Head of caudate nucleus (tissue), 42 donors: ENCODE measurements at regions of chr3 and their contacts with region 1.

Region 1: GRCh38 chr3:173411375-173411973 is 13.9 kb downstream of the NLGN1 start:
- DNase-seq: peak in 34 of 42 donors; percentile 26 to 83 (median 58)

Region 2: GRCh38 chr3:173439004-173439403 is 27.5 kb after region 1 on chr3:
- intact Hi-C with region 1: no loop called
- DNase-seq: no peak

Region 3: GRCh38 chr3:173553635-173554280 is 142.3 kb after region 1 on chr3:
- intact Hi-C with region 1: loop called (anchors 10 kb)
- DNase-seq: peak in 30 of 42 donors; percentile 14 to 80 (median 43)

Region 4: DNA sequence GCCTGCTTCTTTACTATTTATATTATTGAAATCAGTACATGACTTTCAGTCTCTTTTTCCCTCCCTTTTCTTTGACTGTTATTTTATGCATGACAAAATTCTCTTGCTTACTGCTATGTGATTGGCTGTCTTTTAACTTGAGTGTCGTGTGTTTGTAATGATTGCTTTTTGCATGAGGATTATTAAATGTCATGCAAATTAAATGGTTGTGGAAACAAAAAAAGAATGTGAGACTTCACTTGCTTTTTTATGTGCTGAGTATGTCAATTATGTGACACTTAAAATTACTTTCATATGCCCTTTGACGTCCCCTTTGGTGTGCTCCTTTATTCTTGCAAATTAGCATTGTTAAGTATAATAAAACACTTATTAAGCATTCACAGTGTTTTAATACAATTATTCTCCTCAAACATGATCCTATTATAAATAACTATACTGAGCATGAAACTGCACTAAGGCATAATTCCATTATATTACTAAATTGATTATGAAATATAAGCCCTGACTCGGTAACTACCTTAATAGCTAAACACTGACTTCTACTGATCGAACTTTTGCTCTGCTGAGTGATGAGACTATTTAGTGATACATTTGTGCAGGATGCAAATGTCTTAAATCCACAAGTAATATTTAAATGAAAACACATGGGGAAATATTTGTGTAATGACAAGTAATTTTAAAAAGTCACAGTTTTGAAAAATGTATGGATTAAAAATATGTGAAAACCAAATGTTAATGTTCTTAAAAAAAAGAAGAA is 387.8 kb after region 1 on chr3:
- intact Hi-C with region 1: no loop called
- DNase-seq: no peak